ENCODE measurements at regions of chr14 and their contacts with region 1.

Region 1: GRCh38 chr14:34098045-34098984 is 147.4 kb upstream of the EGLN3 start:
- DNase-seq: peak in 1 of 2 donors; percentile 24
- ATAC-seq: peak in 7 of 8 donors; percentile 34 to 77 (median 59)
- H3K4me3 ChIP-seq: no peak overlapping the region
- H3K27ac ChIP-seq: peak overlapping the region in 2 of 10 donors; percentile 18 to 20
- H3K4me1 ChIP-seq: peaks cover 0 to 25% (median 8%) of the 10 kb centered on the region in 9 donors
- H3K27me3 ChIP-seq: no peaks in the 10 kb centered on the region
- CTCF ChIP-seq: peak in 8 of 9 donors; percentile 46 to 78 (median 70)

Region 2: DNA sequence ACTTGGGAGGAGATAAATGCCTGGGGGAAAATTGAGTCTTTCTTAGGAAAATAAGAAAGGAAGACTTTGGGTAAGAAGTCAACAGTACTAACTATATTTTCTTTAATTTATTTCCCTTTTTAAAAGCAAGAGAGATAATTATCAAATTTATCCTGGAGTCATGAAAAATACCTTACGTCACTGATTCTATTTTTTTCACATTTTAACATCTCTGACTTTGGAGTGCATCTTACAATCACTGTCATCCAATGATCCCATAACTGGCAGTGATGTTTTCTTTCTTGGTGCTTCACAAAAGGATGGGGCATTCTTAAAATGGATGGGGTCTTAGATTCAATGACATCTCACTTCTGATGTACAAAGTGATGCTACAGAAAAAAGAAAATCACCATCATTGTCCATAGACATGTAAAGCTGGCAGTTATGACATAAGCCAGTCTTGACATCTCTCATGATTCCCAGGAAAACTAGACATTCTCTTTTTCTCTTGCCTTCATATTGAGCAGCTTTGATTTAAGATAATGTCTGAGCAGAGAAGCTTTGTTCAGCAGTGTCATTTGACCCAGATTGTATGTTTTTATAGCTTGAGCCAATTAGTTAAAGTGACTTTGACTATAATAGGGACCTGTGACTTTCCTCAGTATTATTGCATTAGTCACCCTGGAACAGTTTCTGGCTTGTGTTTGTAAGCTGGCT is 383.6 kb before region 1 on chr14:
- intact Hi-C with region 1: no loop called
- DNase-seq: no peak
- ATAC-seq: no peak
- H3K4me3 ChIP-seq: no peak overlapping the region
- H3K27ac ChIP-seq: no peak overlapping the region
- H3K4me1 ChIP-seq: no peaks in the 10 kb centered on the region
- H3K27me3 ChIP-seq: no peaks in the 10 kb centered on the region
- CTCF ChIP-seq: no peak

Region 3: DNA sequence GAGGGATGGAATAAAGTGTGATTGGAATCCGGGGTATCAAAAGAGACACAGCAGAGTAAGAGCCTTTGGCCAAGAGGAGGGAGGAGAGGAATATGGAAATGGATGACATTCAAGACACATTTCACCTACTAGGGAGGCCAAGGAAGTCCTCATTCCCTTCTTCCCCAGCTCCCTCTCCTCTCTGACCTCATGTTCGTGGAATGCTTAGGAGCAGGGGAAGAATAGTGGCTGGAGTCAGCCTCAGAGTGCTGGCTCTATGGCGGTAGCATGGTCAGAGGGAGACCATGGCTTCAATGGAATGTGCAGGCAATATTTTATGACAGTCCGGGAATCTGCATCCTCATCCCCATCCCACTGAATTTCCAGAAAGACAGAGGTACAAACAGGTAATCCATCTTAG is 344.1 kb before region 1 on chr14:
- intact Hi-C with region 1: no loop called
- DNase-seq: no peak
- ATAC-seq: no peak
- H3K4me3 ChIP-seq: no peak overlapping the region
- H3K27ac ChIP-seq: no peak overlapping the region
- H3K4me1 ChIP-seq: no peaks in the 10 kb centered on the region
- H3K27me3 ChIP-seq: no peaks in the 10 kb centered on the region
- CTCF ChIP-seq: no peak

Region 4: GRCh38 chr14:33848706-33849454 is 249.4 kb before region 1 on chr14:
- intact Hi-C with region 1: loop called in 5 of 10 experiments (anchors 1 to 5 kb)
- DNase-seq: peak; percentile 51 to 71
- ATAC-seq: peak; percentile 78 to 95 (median 92)
- H3K4me3 ChIP-seq: no peak overlapping the region
- H3K27ac ChIP-seq: no peak overlapping the region
- H3K4me1 ChIP-seq: peaks cover 0 to 11% (median 3%) of the 10 kb centered on the region in 9 donors
- H3K27me3 ChIP-seq: no peaks in the 10 kb centered on the region
- CTCF ChIP-seq: peak; percentile 56 to 81 (median 75)

Region 5: GRCh38 chr14:34300882-34301734 is 202.8 kb after region 1 on chr14:
- intact Hi-C with region 1: loop called in 2 of 10 experiments (anchors 10 kb)
- DNase-seq: no peak
- ATAC-seq: peak in 3 of 8 donors; percentile 33 to 61 (median 53)
- H3K4me3 ChIP-seq: no peak overlapping the region
- H3K27ac ChIP-seq: no peak overlapping the region
- H3K4me1 ChIP-seq: peaks cover 0 to 11% (median 0%) of the 10 kb centered on the region in 9 donors
- H3K27me3 ChIP-seq: no peaks in the 10 kb centered on the region
- CTCF ChIP-seq: peak; percentile 39 to 76 (median 66)

Measured in heart right ventricle (tissue), 16 donors.